ENCODE measurements at regions of chr1 and their contacts with region 1.

Region 1: GRCh38 chr1:88302843-88303486 is 381.1 kb upstream of the PKN2 start:
- DNase-seq: peak in 2 of 10 donors; percentile 16 to 45

Region 2: DNA sequence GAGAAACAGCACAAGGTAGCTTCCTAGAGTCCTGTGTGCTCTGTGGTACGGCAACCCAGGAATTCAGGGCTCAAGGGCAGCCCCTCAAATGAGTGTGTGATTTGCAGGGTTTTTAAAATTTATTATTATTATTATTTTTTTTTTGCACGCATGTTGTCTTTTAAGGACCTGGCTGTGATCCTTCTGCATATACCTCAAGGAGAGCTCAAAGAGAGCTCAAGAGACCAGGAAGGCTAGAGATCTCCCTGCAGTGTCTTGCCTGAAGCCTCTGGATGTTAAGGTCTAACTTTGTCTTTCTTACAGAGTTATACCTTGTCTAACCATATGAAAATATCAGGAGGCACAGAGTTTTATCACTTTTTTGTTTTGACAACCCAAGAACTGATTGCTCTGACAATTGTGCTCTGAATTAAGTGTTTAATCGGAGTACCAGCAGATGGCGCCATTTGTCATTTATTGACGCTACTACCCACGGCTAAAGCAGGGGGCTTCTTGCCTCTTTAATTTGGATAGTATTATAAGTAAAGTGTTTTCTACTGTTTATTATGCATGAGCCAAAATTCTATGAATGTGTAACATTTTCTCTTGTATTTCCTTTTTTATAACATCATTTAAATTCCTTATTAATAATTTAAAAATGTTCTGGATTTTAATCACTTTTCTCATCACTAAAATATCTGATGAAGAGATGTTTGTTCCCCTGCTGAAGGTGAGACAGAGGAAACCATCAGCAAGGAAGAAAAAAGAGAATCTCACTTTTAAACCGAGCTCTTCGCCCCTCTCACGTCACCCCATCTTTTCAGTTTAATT is 1010.1 kb before region 1 on chr1:
- intact Hi-C with region 1: loop called (anchors 10 kb)
- DNase-seq: peak in 4 of 10 donors; percentile 56 to 70 (median 60)

Region 3: DNA sequence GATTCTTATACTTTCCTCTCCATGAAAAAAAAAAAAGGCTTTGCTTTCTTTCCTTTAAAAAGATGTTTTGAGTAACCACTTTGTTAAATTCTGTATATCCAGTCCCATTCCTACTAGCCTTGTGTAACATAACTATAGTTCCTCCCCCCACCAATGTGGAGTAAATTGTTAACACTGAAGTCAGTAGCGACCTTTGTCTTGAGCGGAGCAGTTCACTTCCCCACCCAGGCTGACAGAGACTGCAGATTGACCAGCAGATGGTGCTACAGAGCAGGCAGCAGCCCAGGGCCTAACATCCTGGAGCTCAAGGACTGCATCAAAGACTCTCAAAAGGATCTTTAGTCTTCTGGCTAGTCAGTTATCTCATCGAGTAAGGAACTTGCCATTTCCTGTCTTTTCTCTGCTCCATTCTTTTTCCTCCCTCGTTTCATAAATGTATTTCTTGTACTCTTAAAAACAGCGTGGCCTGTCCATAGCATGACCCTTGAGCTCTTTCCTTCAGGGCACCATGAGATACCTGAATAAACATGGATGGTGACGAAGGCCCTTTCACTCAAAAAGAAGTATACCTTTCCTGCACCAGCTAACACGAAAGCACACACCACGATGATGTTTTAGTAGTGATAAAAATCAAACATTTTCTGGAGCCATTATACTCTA is 122.4 kb before region 1 on chr1:
- intact Hi-C with region 1: loop called (anchors 1 kb)
- DNase-seq: peak; percentile 55 to 96 (median 80)